ENCODE measurements at regions of chr2 and their contacts with region 1.

Region 1: GRCh38 chr2:166960702-166961270 is 72.5 kb downstream of the XIRP2 start:
- DNase-seq: no peak
- ATAC-seq: no peak
- H3K4me3 ChIP-seq: no peak overlapping the region
- H3K27ac ChIP-seq: no peak overlapping the region
- H3K4me1 ChIP-seq: no peaks in the 10 kb centered on the region
- H3K27me3 ChIP-seq: no peaks in the 10 kb centered on the region
- CTCF ChIP-seq: no peak
- POLR2A ChIP-seq: no peak
- RAD21 ChIP-seq: no peak

Region 2: DNA sequence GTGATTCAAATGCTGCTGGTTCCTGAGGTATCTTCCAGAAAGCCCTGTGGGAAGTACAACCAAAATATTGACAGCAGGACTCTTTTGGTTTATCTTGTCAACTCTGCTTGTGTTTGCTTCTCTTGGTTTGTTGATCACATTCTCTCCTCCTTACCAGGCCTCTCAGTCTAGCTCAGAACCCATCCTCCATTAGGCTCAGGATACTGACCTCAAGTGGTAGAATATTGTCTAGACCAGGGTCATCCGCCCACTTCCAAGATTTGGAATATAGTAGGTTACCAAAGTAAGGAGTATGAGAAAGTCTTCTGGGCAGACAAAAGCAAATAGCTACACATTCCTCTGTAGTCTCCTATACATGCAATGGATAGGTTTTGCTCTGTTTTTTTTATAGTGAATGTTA is 15.9 kb before region 1 on chr2:
- CTCF ChIA-PET with region 1: no interaction called
- POLR2A ChIA-PET with region 1: no interaction called
- RAD21 ChIA-PET with region 1: no interaction called
- intact Hi-C with region 1: no loop called
- DNase-seq: no peak
- ATAC-seq: no peak
- H3K4me3 ChIP-seq: no peak overlapping the region
- H3K27ac ChIP-seq: no peak overlapping the region
- H3K4me1 ChIP-seq: no peaks in the 10 kb centered on the region
- H3K27me3 ChIP-seq: no peaks in the 10 kb centered on the region
- CTCF ChIP-seq: no peak
- POLR2A ChIP-seq: no peak
- RAD21 ChIP-seq: no peak

Region 3: GRCh38 chr2:167028505-167028904 is 67.7 kb after region 1 on chr2:
- CTCF ChIA-PET with region 1: no interaction called
- POLR2A ChIA-PET with region 1: no interaction called
- RAD21 ChIA-PET with region 1: no interaction called
- intact Hi-C with region 1: loop called (anchors 10 kb)
- DNase-seq: no peak
- ATAC-seq: no peak
- H3K4me3 ChIP-seq: no peak overlapping the region
- H3K27ac ChIP-seq: no peak overlapping the region
- H3K4me1 ChIP-seq: no peaks in the 10 kb centered on the region
- H3K27me3 ChIP-seq: no peaks in the 10 kb centered on the region
- CTCF ChIP-seq: no peak
- POLR2A ChIP-seq: no peak
- RAD21 ChIP-seq: no peak

Region 4: DNA sequence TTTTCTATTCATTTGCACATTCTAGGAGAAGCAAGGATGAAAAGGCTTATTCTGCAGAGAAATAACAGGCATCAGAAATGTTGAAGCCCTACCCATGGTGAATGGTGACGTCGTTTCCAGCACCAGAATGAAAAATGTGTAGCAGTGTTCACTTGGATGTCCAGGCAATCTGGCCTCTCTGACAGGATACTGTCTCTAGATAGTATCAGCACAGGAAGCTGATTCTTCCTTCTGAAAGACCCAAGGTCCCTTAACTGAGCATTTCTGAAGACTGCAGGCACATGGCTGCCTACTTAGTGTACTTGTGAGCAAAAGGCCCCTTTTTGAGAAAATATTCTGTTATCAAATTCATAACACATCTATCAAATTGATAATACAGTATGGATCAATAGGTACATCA is 161.6 kb after region 1 on chr2:
- CTCF ChIA-PET with region 1: no interaction called
- POLR2A ChIA-PET with region 1: no interaction called
- RAD21 ChIA-PET with region 1: no interaction called
- intact Hi-C with region 1: no loop called
- DNase-seq: no peak
- ATAC-seq: no peak
- H3K4me3 ChIP-seq: no peak overlapping the region
- H3K27ac ChIP-seq: no peak overlapping the region
- H3K4me1 ChIP-seq: no peaks in the 10 kb centered on the region
- H3K27me3 ChIP-seq: no peaks in the 10 kb centered on the region
- CTCF ChIP-seq: no peak
- POLR2A ChIP-seq: no peak
- RAD21 ChIP-seq: no peak

Measured in HCT116 (cell line).